BJ (cell line): ENCODE measurements at regions of chr7 and their contacts with region 1.

Region 1: GRCh38 chr7:2680792-2681490 is 7.1 kb upstream of the AMZ1 start:
- DNase-seq: no peak
- H3K4me3 ChIP-seq: no peak overlapping the region
- H3K27me3 ChIP-seq: no peaks in the 10 kb centered on the region
- CTCF ChIP-seq: peak; percentile 81

Region 2: DNA sequence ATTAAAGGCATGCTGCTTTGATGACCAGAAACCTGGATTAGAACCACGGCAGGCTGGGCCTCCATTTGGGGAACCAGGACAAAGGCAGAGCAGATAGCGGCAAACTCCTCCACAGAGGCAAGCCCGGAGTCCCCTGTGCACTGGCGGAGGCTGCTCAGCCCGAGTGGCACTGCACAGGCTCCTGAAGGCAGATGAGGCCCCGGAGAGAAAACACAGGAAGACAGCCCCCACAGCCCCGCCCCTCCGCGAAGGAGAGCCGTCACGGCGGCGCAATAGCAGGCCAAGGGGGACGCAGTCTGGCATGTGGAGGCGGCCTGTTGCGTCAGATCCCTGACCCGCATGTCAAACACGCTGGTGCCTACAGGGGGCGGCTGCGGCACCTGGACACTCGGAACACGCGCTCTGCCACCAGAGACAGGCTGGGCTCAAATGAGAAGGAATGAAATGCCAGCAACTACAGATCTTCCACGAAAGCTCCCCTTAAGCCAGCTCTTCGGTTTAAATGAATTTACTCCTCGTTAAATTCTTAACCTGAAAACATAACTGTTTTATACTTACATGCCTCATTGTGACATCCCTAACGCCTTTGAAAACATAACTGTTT is 576.7 kb before region 1 on chr7:
- CTCF ChIA-PET with region 1: no interaction called
- POLR2A ChIA-PET with region 1: no interaction called
- DNase-seq: no peak
- H3K4me3 ChIP-seq: no peak overlapping the region
- H3K27me3 ChIP-seq: no peaks in the 10 kb centered on the region
- CTCF ChIP-seq: peak; percentile 83

Region 3: GRCh38 chr7:2451171-2452073 is 229.5 kb before region 1 on chr7:
- CTCF ChIA-PET with region 1: interaction called, 13 read pairs
- POLR2A ChIA-PET with region 1: no interaction called
- DNase-seq: no peak
- H3K4me3 ChIP-seq: no peak overlapping the region
- H3K27me3 ChIP-seq: no peaks in the 10 kb centered on the region
- CTCF ChIP-seq: peak; percentile 96

Region 4: GRCh38 chr7:2477447-2478398 is 203.2 kb before region 1 on chr7:
- CTCF ChIA-PET with region 1: interaction called, 13 read pairs
- POLR2A ChIA-PET with region 1: no interaction called
- DNase-seq: no peak
- H3K4me3 ChIP-seq: no peak overlapping the region
- H3K27me3 ChIP-seq: no peaks in the 10 kb centered on the region; the same call in none of the 2 replicates
- CTCF ChIP-seq: peak; percentile 90

Region 5: GRCh38 chr7:2567679-2568278 is 113.2 kb before region 1 on chr7:
- CTCF ChIA-PET with region 1: interaction called, 47 read pairs
- POLR2A ChIA-PET with region 1: no interaction called
- DNase-seq: no peak
- H3K4me3 ChIP-seq: no peak overlapping the region
- H3K27me3 ChIP-seq: no peaks in the 10 kb centered on the region
- CTCF ChIP-seq: peak; percentile 76